ENCODE measurements at regions of chr17 and their contacts with region 1.

Region 1: GRCh38 chr17:58417300-58418092 is at the start of gene RNF43:
- DNase-seq: peak; percentile 79 to 93 (median 87)
- ATAC-seq: peak; percentile 99 to 100 (median 100)
- H3K4me3 ChIP-seq: peak within 1 kb of the TSS; percentile 20 to 61 (median 48)
- H3K27ac ChIP-seq: peak within 1 kb of the TSS in 10 of 12 donors; percentile 29 to 75 (median 54)
- H3K4me1 ChIP-seq: peaks cover 0 to 8% (median 0%) of the 10 kb centered on the region in 12 donors
- H3K27me3 ChIP-seq: peaks cover 0 to 23% (median 0%) of the 10 kb centered on the region in 9 donors
- CTCF ChIP-seq: peak; percentile 46 to 76 (median 69)
- POLR2A ChIP-seq: peak in 1 of 2 donors; percentile 60
- total RNA-seq, gene RNF43: 3.8 to 7.5 (median 5.1) TPM

Region 2: DNA sequence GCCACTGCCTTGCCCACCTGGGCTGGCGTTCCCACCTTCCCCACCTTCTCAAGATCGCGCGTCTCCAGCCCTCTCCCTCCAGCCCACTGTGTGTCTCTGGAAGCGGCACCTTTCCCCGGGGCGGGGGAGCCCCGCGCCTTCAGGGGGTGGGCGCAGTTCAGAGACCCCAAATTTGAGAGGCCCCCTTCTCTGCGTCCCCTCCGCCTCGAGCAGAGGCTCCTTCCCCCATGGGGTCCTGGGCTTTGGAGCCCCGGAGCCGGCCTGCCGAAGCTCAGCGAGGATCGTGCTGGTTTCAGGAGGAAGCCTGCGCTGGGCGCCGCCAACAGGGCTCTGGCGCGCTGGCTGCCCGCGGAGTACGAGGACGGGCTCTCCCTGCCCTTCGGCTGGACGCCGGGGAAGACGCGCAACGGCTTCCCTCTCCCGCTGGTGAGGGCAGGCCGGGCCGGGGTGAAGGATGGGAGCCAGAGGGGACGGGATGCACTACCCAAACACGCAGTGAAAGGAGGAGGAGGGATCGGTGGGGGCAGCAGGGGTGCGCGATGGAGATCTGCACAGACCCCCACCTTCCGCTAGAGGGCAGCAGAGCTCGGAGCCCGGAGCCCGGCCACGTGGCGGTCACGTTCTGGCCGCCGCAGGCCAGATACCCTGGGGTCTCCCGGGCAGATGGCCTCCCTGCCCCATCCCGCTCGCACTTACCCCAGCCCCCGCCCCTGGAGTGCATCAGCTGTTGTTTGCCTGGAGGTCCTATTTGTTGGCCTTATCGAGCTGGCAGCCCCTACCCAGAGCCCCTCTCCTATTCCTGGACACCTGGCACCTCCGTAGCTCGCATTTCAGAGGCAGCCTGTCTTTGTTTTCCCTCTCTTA is 168.0 kb before region 1 on chr17:
- intact Hi-C with region 1: loop called in 2 of 10 experiments (anchors 5 to 10 kb)
- DNase-seq: peak; percentile 59 to 88 (median 66)
- ATAC-seq: peak; percentile 67 to 93 (median 88)
- H3K4me3 ChIP-seq: peak overlapping the region; percentile 6 to 66 (median 48)
- H3K27ac ChIP-seq: no peak overlapping the region
- H3K4me1 ChIP-seq: peaks cover 4 to 11% (median 6%) of the 10 kb centered on the region in 12 donors
- H3K27me3 ChIP-seq: peaks cover 4 to 73% (median 22%) of the 10 kb centered on the region in 9 donors
- CTCF ChIP-seq: peak; percentile 90 to 98 (median 92)
- POLR2A ChIP-seq: no peak

Region 3: DNA sequence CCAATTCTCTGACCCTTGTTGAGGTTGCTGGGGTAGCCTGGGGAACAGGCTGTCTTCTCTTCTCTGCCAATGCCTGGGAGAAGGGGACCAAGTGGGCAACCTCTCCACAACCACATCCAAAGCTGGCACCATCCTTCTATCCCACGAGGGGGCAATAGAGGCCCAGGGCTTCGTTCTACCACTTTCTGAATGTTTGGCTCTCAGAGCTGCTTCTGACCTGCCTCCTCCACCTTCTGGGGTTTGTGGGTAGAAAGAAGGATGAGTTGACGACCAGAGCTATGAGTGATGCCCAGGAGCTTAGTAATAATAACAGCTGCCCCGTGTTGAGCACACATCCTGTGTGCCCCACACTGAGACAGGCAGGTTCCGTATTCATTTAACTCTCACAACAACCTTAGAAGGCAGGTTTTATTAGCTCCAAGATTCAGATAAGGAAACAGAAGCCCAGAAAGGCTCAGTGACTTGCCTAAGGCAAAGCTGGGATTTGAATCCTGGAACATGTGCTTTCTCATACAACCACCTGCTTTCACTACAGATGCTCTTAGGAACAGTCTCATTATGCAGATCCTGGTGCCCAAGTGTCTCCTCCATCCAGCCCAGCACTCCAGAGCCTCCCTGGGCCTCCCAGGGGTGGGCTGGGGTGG is 100.0 kb before region 1 on chr17:
- intact Hi-C with region 1: loop called in 6 of 10 experiments (anchors 5 to 10 kb)
- DNase-seq: peak in 3 of 5 donors; percentile 23 to 44 (median 30)
- ATAC-seq: peak in 3 of 4 donors; percentile 50 to 63 (median 51)
- H3K4me3 ChIP-seq: no peak overlapping the region
- H3K27ac ChIP-seq: peak overlapping the region in 1 of 12 donors; percentile 48
- H3K4me1 ChIP-seq: peaks cover 0 to 3% (median 0%) of the 10 kb centered on the region in 12 donors
- H3K27me3 ChIP-seq: no peaks in the 10 kb centered on the region
- CTCF ChIP-seq: peak in 11 of 12 donors; percentile 23 to 60 (median 43)
- POLR2A ChIP-seq: no peak

Region 4: GRCh38 chr17:58329035-58329809 is 88.3 kb before region 1 on chr17:
- intact Hi-C with region 1: loop called in 3 of 10 experiments (anchors 10 kb)
- DNase-seq: peak in 3 of 5 donors; percentile 51 to 72 (median 51)
- ATAC-seq: peak in 3 of 4 donors; percentile 34 to 52 (median 39)
- H3K4me3 ChIP-seq: peak overlapping the region in 2 of 12 donors; percentile 58 to 79
- H3K27ac ChIP-seq: peak overlapping the region in 1 of 12 donors; percentile 100
- H3K4me1 ChIP-seq: peaks cover 0 to 38% (median 0%) of the 10 kb centered on the region in 12 donors
- H3K27me3 ChIP-seq: peaks cover 0 to 55% (median 14%) of the 10 kb centered on the region in 9 donors
- CTCF ChIP-seq: peak in 7 of 12 donors; percentile 6 to 35 (median 17)
- POLR2A ChIP-seq: no peak

Region 5: DNA sequence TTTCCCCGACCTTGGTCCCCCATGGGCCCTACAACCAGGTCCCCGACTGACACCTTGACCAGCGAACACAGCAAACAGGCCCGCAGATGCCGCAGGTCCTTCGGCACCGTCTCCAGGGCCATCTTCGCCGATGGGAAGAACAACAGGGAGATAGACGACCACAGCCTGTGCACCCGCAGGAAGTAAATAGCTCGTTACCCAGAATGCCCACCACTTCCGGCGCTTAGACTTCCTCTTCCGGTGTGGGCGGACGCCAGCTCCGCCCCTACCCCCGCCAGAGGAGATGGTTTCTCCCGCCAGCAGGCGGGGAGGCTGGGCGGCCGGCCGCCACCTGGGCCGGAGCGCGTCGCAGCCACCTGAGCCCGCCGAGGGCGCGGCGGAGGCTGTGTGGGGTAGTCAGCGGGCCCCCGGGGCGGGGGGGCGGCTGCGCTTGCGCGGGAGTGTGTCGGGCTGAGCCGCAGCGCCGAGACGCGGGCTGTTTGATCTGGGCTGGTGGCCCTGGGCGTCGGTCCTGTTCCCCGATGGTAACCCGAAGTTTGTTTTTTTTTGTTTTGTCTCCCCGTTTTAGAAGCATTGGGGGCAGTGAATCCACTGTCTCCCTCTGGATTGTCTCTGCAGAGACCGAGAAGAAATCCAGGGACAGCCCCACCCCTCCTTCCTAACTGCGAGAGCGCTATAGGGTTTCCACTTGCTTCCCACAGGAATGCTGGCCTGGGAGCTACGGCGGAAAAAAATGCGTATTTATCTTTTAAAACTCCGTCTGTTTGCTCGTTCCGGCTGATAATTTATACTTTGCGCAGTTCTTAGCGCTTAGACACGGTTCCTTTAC is 65.3 kb before region 1 on chr17 and contains the start of gene SUPT4H1:
- intact Hi-C with region 1: loop called in 9 of 10 experiments (anchors 1 to 5 kb)
- DNase-seq: peak; percentile 88 to 93 (median 90)
- ATAC-seq: peak; percentile 96 to 98 (median 97)
- H3K4me3 ChIP-seq: peak within 1 kb of the TSS; percentile 70 to 98 (median 88)
- H3K27ac ChIP-seq: peak within 1 kb of the TSS; percentile 84 to 98 (median 94)
- H3K4me1 ChIP-seq: peaks cover 0 to 49% (median 17%) of the 10 kb centered on the region in 12 donors
- H3K27me3 ChIP-seq: no peaks in the 10 kb centered on the region
- CTCF ChIP-seq: peak in 2 of 12 donors; percentile 16 to 21
- POLR2A ChIP-seq: peak in 1 of 2 donors; percentile 91
- total RNA-seq, gene SUPT4H1: 44.1 to 69.9 (median 58.0) TPM

Region 6: DNA sequence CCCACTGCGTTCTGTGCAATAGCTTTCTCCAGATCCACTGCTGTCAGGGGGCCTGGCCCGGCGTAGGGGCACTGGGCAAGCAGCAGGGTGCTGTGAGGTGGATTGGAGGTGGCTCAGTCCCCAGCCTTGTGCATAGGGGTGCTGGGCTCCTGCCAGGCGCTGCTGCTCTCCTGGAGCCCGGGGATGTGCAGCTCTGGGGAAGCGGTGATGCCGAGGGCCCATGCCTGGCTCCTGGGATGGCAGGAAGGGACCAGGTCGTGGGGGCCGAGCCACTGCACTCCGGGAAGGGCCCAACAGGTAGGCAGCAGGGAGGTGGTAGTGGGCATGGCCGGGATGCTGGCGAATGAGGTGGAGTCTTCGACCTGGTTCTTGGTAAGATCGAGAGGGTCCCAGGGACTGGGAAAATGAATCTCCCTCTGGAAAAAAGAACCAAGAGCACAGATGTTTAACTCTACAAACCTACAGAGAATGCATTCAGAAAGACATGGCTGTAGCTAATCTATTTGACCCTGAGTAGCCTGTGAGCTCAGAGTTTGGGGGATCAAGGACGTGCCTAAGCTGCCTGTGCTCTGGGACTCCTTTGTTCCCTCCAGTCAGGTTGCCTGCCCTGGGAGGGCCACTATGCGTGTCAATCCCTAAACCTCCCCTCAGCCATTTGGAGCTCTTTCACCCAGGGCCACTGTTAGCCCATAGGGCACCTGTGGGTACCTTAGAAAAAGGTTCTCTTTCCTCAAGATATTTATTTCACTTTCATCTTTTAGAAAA is 58.9 kb before region 1 on chr17:
- intact Hi-C with region 1: loop called in 6 of 10 experiments (anchors 2 to 5 kb)
- DNase-seq: no peak
- ATAC-seq: no peak
- H3K4me3 ChIP-seq: no peak overlapping the region
- H3K27ac ChIP-seq: no peak overlapping the region
- H3K4me1 ChIP-seq: peaks cover 0 to 1% (median 0%) of the 10 kb centered on the region in 12 donors
- H3K27me3 ChIP-seq: no peaks in the 10 kb centered on the region
- CTCF ChIP-seq: no peak
- POLR2A ChIP-seq: no peak